Heart left ventricle (tissue), 16 donors: ENCODE measurements at regions of chr9 and their contacts with region 1.

Region 1: GRCh38 chr9:30995951-30996738 is 1388.3 kb upstream of the ACO1 start:
- DNase-seq: no peak
- ATAC-seq: no peak
- H3K4me3 ChIP-seq: no peak overlapping the region
- H3K27ac ChIP-seq: no peak overlapping the region
- H3K4me1 ChIP-seq: no peaks in the 10 kb centered on the region
- H3K27me3 ChIP-seq: no peaks in the 10 kb centered on the region
- CTCF ChIP-seq: no peak
- POLR2A ChIP-seq: no peak

Region 2: GRCh38 chr9:30900706-30901105 is 95.4 kb before region 1 on chr9:
- intact Hi-C with region 1: no loop called
- DNase-seq: no peak
- ATAC-seq: no peak
- H3K4me3 ChIP-seq: no peak overlapping the region
- H3K27ac ChIP-seq: no peak overlapping the region
- H3K4me1 ChIP-seq: no peaks in the 10 kb centered on the region
- H3K27me3 ChIP-seq: no peaks in the 10 kb centered on the region
- CTCF ChIP-seq: no peak
- POLR2A ChIP-seq: no peak

Region 3: DNA sequence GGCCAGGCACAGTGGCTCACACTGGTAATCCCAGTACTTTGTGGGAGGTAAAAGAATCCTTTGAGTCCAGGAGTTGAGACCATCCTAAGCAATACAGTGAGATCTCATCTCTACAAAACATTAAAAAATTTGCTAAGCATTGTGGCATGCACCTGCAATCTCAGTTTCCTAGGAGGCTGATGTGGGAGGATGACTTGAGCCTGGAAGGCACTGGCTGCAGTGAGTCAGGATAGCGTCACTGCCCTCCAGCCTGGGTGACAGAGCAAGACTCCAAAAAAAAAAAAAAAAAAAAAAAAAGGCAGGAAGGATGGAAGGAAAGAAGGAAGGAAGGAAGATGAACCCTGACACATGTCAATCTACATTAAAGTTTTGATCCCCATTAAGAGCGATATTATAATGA is 63.9 kb before region 1 on chr9:
- intact Hi-C with region 1: loop called in 1 of 10 experiments (anchors 10 kb)
- DNase-seq: no peak
- ATAC-seq: no peak
- H3K4me3 ChIP-seq: no peak overlapping the region
- H3K27ac ChIP-seq: no peak overlapping the region
- H3K4me1 ChIP-seq: no peaks in the 10 kb centered on the region
- H3K27me3 ChIP-seq: no peaks in the 10 kb centered on the region
- CTCF ChIP-seq: no peak
- POLR2A ChIP-seq: no peak